PC-9 (cell line): ENCODE measurements at regions of chr7 and their contacts with region 1.

Region 1: GRCh38 chr7:134533288-134533771 is 6.0 kb downstream of the AKR1B10 start:
- DNase-seq: peak; percentile 44 to 95
- H3K4me3 ChIP-seq: peak overlapping the region; percentile 87
- H3K27ac ChIP-seq: peak overlapping the region; percentile 96
- H3K4me1 ChIP-seq: peaks cover 56% of the 10 kb centered on the region
- H3K27me3 ChIP-seq: no peaks in the 10 kb centered on the region
- CTCF ChIP-seq: no peak

Region 2: GRCh38 chr7:134547397-134548054 is 14.2 kb after region 1 on chr7:
- CTCF ChIA-PET with region 1: no interaction called
- POLR2A ChIA-PET with region 1: interaction called, 11 read pairs
- intact Hi-C with region 1: loop called (anchors 1 kb)
- DNase-seq: peak; percentile 75 to 77
- H3K4me3 ChIP-seq: peak overlapping the region; percentile 20; the same call in 1 of the 2 replicates
- H3K27ac ChIP-seq: peak overlapping the region; percentile 84
- H3K4me1 ChIP-seq: peaks cover 42% of the 10 kb centered on the region
- H3K27me3 ChIP-seq: no peaks in the 10 kb centered on the region
- CTCF ChIP-seq: peak; percentile 97

Region 3: GRCh38 chr7:134562136-134562535 is 28.8 kb after region 1 on chr7:
- CTCF ChIA-PET with region 1: no interaction called
- POLR2A ChIA-PET with region 1: no interaction called
- intact Hi-C with region 1: loop called (anchors 2 kb)
- DNase-seq: no peak
- H3K4me3 ChIP-seq: no peak overlapping the region
- H3K27ac ChIP-seq: peak overlapping the region; percentile 95
- H3K4me1 ChIP-seq: peaks cover 43% of the 10 kb centered on the region
- H3K27me3 ChIP-seq: no peaks in the 10 kb centered on the region
- CTCF ChIP-seq: no peak

Region 4: DNA sequence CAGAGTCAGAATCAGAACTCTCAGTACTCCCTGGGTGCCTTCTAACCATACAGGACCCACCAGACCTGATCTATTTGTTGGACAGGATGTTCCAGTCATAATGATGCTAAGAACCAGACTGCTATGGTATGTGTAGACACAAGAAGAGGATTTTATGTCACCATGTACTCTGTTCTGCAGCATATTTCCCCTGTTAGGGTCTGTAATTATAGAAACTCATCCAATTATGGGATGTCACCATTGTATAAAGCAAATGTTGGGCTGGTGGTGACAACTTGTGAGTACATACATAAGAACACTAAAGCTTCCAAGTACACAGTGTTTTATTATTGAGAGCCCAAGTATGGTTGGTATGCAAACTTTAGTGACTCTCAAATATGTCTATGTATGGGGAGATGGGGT is 385.9 kb after region 1 on chr7:
- CTCF ChIA-PET with region 1: no interaction called
- POLR2A ChIA-PET with region 1: no interaction called
- intact Hi-C with region 1: no loop called
- DNase-seq: no peak
- H3K4me3 ChIP-seq: no peak overlapping the region
- H3K27ac ChIP-seq: no peak overlapping the region
- H3K4me1 ChIP-seq: no peaks in the 10 kb centered on the region
- H3K27me3 ChIP-seq: no peaks in the 10 kb centered on the region
- CTCF ChIP-seq: no peak